ENCODE measurements at regions of chr12 and their contacts with region 1.

Region 1: DNA sequence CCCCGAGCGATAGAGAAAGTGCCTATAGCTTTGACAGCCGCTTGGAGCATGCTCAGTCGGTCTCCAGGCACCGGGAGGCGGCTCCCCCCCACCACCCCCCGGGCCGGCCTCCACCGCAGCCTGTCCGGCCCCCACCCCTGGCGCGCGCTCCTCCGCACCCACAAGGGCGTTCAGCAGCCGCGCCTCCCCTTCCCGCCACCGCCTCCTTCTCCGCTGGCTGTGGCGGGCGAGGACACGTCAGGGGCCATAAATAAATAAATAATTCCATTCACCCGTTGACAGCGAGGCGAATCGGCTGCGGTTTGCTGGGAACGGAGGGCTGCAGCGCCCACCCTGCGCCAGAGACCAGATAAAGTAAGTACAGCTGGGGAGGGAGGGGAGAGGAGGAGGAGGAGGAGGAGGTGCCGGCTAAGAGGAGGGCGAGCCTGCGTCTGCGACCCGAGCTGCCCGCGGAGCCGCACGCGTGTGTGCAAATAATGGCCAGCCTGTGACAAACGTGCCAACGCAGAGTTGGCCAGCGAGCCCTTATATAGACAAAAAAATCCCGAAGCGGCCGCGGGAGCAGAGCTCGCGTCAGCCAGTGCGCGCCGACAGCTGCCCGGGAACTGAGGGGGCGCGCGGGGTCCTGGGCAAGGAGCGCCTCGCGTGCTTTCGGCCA is at the start of gene SLC16A7:
- DNase-seq: peak; percentile 81
- H3K4me3 Mint-ChIP-seq: peak within 1 kb of the TSS; percentile 77
- H3K27ac Mint-ChIP-seq: peak within 1 kb of the TSS; percentile 91
- H3K4me1 Mint-ChIP-seq: peaks cover 35% of the 10 kb centered on the region
- H3K27me3 Mint-ChIP-seq: no peaks in the 10 kb centered on the region
- total RNA-seq, gene SLC16A7: 20.4 to 22.0 TPM

Region 2: DNA sequence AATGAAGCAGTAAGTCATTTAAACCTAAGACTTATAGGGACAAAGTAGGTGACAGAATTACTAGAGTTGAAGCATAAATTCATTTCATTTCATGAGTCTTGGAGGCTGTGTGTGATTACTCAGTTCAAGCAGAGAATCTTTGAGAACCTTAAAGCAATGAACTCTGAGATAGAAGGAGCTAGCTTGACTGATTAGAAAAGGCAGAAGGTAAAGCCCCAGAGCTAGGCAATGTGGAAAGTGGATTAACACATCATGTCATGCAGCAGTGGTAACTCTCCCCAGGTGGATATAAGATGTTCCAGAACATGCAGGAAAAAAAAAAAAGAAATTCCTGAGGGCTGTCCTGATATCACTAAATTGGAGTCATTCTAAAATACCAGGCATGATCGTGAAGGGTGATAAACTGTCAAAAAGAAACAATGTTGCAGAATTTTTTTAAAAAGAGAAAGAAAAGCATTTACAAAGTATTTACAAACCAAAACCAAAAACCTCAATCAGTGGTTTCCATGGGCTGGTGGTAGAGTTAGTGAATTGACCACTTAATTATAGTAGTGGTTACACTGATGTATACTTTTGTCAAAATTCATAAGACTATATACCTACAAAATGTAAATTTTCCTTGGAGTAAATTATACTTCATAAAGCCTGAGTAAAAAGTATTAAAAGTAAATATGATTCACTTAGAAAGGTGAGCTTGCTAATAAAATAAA is 12.9 kb before region 1 on chr12:
- CTCF ChIA-PET with region 1: no interaction called
- POLR2A ChIA-PET with region 1: interaction called, 23 read pairs
- DNase-seq: no peak
- H3K4me3 Mint-ChIP-seq: no peak overlapping the region
- H3K27ac Mint-ChIP-seq: no peak overlapping the region
- H3K4me1 Mint-ChIP-seq: peaks cover 24% of the 10 kb centered on the region
- H3K27me3 Mint-ChIP-seq: no peaks in the 10 kb centered on the region

Region 3: DNA sequence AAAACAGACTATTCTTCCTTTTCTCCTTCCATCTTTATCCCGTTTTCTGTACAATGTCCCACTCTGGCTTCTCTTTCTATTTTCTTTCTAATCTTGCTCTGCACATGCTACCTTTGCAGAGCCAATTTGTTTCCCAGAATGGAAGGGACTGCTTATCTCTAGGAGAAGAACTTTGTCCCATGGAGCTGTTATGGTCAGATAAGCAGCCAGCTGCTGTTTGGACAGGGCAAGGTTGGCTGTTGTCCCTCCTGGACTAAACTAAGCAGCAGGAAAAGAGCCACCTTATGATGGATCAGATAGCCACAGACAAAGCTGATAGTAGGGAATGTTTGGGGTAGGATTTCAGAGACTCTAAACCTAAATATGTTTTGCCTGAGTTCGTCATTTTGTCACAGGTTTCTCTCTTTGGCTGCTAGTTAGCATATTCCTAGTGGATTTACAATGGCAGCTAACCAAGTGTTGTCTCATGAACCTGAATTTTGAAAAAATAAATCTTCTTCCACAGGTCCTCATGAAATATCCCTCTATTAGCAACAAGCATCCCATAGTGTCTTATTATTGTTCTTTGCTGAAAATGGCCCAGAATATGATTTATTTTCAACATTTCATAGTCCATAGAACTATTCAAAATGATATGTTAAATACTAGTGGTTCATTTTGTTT is 262.6 kb after region 1 on chr12:
- CTCF ChIA-PET with region 1: no interaction called
- POLR2A ChIA-PET with region 1: no interaction called
- DNase-seq: no peak
- H3K4me3 Mint-ChIP-seq: no peak overlapping the region
- H3K27ac Mint-ChIP-seq: no peak overlapping the region
- H3K4me1 Mint-ChIP-seq: no peaks in the 10 kb centered on the region
- H3K27me3 Mint-ChIP-seq: no peaks in the 10 kb centered on the region

Measured in activated CD4-positive, alpha-beta memory T cell treated with anti-CD3 and anti-CD28 coated beads, Interleukin-2, amount 10 ng/mL, durations not matched to agents 7 days and 5 days (primary cell).